Dorsolateral prefrontal cortex (tissue), 120 donors: ENCODE measurements at regions of chr2 and their contacts with region 1.

Region 1: GRCh38 chr2:22355816-22356433 is 1029.1 kb upstream of the KLHL29 start:
- DNase-seq: peak; percentile 26 to 86 (median 62)
- H3K4me3 ChIP-seq: no peak overlapping the region
- H3K27ac ChIP-seq: no peak overlapping the region
- H3K27me3 ChIP-seq: peaks cover 0 to 7% (median 0%) of the 10 kb centered on the region in 45 donors
- CTCF ChIP-seq: peak; percentile 78 to 99 (median 92)

Region 2: DNA sequence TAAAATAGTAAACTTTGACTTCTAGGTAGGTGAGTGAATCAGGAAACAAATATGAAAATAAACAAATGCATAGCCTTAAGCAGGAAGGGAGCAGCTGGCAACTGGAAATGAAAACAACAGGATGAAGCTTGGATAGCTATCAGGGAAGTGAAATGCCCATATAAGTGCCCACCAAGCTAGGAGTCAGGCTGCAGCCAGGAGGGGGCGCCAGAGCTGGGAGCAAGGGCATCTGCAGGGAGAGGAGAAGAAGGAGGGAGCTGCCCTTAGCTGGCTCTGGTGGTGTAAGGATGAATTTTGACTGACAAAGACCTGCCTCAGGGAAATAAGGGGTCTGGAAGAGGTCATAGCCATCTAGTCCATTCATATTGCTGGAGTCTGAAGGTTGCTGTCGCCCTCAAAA is 933.9 kb before region 1 on chr2:
- intact Hi-C with region 1: loop called in 1 of 2 experiments (anchors 5 kb)
- DNase-seq: no peak
- H3K4me3 ChIP-seq: no peak overlapping the region
- H3K27ac ChIP-seq: no peak overlapping the region
- H3K27me3 ChIP-seq: peaks cover 0 to 5% (median 0%) of the 10 kb centered on the region in 45 donors
- CTCF ChIP-seq: peak in 37 of 56 donors; percentile 12 to 48 (median 30)

Region 3: DNA sequence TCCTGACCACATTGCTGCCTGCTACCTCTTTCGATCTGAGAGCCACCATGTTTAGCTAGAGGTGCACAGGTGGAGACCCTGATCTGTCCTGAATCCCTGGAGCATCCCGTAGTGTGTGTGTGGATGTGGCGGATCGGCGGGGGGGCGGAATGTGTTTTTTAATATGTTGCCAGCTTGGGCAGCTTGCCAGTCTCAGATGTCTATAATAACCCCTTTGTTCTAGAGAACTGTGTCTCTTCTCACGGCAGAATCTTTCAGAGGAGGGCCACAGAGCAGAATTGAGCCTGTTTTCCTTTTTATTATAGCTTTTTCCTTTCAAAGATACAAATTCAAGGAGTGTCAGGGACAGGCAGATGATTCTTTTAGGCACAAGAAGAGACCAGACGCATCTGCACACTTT is 94.9 kb after region 1 on chr2:
- intact Hi-C with region 1: loop called in 1 of 2 experiments (anchors 5 kb)
- DNase-seq: peak in 9 of 10 donors; percentile 30 to 83 (median 54)
- H3K4me3 ChIP-seq: peak overlapping the region in 39 of 59 donors; percentile 4 to 56 (median 32)
- H3K27ac ChIP-seq: peak overlapping the region in 41 of 59 donors; percentile 2 to 82 (median 61)
- H3K27me3 ChIP-seq: no peaks in the 10 kb centered on the region
- CTCF ChIP-seq: no peak

Region 4: DNA sequence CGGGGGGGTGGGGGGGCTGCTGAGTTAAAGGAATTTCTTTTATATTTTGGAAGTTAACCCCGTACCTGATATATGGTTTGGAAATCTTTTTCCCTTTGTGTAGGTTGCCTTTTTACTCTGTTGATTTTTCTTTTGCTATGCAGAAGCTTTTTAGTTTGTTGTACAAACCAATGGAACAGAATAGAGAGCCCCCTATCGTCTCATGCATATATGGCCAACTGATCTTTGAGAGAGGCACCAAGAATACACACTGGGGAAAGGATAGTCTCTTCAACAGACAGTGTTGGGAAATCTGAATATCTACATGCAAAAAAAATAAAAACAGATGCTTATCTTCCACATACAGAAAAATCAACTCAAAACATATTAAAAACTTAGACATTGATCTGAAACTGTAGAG is 381.2 kb after region 1 on chr2:
- intact Hi-C with region 1: loop called in 1 of 2 experiments (anchors 5 kb)
- DNase-seq: no peak
- H3K4me3 ChIP-seq: no peak overlapping the region
- H3K27ac ChIP-seq: no peak overlapping the region
- H3K27me3 ChIP-seq: peaks cover 0 to 2% (median 0%) of the 10 kb centered on the region in 45 donors
- CTCF ChIP-seq: peak in 44 of 56 donors; percentile 14 to 64 (median 36)

Region 5: DNA sequence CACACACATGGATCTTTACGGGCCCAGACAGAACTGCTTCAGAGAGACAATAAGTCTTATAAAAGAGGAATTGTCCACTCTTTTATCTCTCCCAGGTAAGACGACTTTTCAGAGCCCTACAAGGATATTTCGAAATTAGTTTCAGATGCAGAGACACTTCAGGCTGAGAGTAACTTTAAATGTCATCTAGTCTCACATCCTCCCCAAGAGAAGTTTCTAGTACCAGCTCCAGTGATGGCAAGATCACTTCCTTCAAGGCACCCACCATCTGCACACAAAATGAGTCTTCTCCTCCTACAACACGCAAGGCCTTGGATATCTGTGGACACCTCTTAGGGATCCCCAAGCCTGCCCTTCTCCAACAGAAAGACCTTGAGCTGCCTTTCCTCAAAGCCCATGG is 990.1 kb after region 1 on chr2:
- intact Hi-C with region 1: loop called (anchors 5 to 10 kb)
- DNase-seq: no peak
- H3K4me3 ChIP-seq: no peak overlapping the region
- H3K27ac ChIP-seq: no peak overlapping the region
- H3K27me3 ChIP-seq: peaks cover 0 to 13% (median 0%) of the 10 kb centered on the region in 45 donors
- CTCF ChIP-seq: no peak

Region 6: DNA sequence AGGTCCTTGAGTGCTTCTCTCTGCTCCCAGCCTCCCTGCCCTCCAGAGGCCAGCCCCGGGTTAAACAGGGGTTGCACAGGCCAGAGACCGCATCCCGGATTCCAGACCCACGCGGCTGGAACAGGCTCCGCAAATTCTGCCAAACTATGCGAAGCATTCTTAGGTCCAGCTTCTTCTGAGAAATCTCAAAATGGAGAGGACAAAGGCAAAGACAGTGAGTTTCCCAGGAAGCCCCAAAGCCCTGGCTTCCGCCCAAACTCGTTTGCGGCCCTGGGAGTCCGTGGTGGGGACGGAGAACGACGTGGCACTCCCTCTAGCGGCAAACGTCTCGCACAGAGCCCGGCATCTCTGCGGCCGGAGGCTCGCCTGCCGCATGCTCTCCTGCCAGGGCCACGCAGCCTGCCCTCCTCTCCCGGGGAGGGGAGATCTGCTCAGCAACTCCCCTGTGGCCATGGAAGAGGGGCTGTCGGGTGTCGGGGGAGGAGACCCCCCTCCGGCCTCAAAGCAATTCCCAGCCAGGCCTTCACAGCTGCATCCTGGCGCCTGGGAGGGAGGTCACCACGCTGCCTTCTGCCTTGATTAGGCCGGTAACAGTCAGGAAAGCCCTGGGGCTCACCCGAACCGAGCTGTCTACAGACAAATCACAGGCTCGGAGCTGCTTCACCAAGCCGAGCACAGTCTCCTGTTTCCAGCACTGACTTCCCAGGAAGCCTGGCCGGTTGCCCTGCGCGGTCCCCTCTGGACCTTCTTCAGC is 995.6 kb after region 1 on chr2:
- intact Hi-C with region 1: loop called (anchors 5 to 10 kb)
- DNase-seq: peak; percentile 65 to 88 (median 79)
- H3K4me3 ChIP-seq: peak overlapping the region in 24 of 59 donors; percentile 0 to 39 (median 20)
- H3K27ac ChIP-seq: peak overlapping the region in 24 of 59 donors; percentile 16 to 68 (median 42)
- H3K27me3 ChIP-seq: peaks cover 0 to 37% (median 0%) of the 10 kb centered on the region in 45 donors
- CTCF ChIP-seq: peak; percentile 57 to 94 (median 84)